A673 (cell line): ENCODE measurements at regions of chrX and their contacts with region 1.

Region 1: GRCh38 chrX:46340696-46341095 is 204.5 kb downstream of the ZNF674 start:
- DNase-seq: no peak
- H3K4me3 ChIP-seq: no peak overlapping the region
- H3K27ac ChIP-seq: no peak overlapping the region
- H3K4me1 ChIP-seq: no peaks in the 10 kb centered on the region
- H3K27me3 ChIP-seq: no peaks in the 10 kb centered on the region
- CTCF ChIP-seq: no peak

Region 2: DNA sequence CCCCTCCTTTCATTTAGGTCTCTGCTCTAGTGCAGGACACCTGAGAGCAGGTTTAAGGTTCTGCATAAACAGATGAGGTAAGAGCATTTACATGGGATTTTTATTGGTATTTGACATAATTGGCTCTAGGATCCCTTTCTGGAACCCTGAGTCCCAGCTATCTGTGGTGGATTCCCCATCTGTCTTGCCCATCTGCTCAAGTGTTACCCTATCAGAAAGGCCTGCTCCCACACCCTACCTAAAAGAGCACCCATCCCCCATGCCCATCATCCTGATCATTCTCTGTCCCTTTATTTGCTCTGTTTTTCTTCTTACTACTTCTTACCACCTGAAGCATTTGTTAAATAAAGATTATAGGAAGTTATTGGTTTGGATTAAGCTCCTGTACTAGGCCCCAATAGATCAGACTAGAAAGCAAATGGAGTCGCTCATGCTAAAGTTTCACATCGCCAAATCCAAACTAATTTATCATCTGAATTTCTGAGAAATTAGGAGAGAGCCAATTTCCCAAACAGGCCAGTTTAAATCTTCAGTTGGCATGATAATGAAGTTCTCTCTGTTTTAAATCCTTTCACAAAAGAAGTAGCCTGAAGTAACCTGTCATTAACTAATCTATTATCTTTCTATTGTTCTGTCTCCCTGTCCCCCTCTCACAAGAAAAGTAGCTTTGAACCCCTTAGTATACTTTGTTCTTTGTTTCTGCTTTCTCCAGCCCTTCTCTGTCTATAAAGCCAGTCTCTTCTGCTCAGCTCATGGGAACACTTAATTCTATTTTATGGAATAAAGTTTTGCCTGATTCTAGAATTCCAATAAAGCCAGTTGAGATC is 25.9 kb after region 1 on chrX:
- CTCF ChIA-PET with region 1: no interaction called
- POLR2A ChIA-PET with region 1: interaction called, 12 read pairs
- intact Hi-C with region 1: no loop called
- DNase-seq: no peak
- H3K4me3 ChIP-seq: no peak overlapping the region
- H3K27ac ChIP-seq: no peak overlapping the region
- H3K4me1 ChIP-seq: peaks cover 6% of the 10 kb centered on the region
- H3K27me3 ChIP-seq: no peaks in the 10 kb centered on the region
- CTCF ChIP-seq: no peak